ENCODE measurements at regions of chr2 and their contacts with region 1.

Region 1: DNA sequence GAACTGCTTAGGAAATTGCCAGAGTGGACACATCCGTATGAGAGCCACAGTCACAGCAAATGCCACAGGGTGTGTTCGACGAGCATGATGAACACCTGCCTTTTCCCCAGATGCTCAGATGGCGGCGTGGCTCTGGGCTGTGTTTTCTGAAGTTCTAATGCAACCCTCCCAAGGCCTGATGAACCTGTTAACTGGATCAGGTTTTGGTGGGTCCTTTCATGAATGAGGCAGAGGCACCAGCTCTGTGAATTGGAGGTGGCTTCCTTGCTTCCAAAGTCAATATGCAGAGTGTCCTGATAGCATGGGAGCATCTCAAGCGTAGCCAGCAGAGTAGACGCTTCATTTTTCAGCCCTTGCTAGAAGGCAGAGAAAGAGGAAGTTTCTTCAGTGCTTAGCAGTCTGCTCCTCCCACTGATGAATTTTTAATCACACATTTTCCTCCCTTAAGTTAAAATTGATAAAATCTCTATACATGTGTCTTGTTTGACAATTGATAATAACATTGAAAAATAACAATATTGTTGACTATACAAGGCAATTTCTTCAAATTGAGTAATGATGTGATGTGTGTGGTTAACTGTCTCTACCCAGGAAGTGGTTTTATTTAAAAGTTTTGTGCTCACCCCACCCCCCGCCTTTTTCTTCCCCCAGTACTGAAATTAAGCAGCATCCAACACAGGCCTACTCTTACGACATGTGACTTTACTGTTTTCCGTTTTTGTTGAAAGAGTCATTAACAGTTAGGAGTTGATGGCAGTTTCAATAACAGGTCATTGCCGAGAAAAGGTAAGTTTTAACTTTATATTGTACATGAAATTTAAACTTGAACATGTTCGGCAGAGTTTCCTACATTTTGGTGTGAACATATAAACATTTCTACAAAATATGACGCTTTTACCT is at the start of gene ARHGAP15:
- DNase-seq: peak; percentile 85
- H3K4me3 Mint-ChIP-seq: peak within 1 kb of the TSS; percentile 83
- H3K27ac Mint-ChIP-seq: peak within 1 kb of the TSS; percentile 100
- H3K4me1 Mint-ChIP-seq: peaks cover 29% of the 10 kb centered on the region
- H3K27me3 Mint-ChIP-seq: no peaks in the 10 kb centered on the region
- total RNA-seq, gene ARHGAP15: 70.2 to 71.2 TPM

Region 2: GRCh38 chr2:143140864-143141661 is 12.1 kb after region 1 on chr2:
- CTCF ChIA-PET with region 1: interaction called, 5 read pairs
- POLR2A ChIA-PET with region 1: interaction called, 10 read pairs
- intact Hi-C with region 1: loop called (anchors 1 kb)
- DNase-seq: peak; percentile 26
- H3K4me3 Mint-ChIP-seq: peak overlapping the region; percentile 31
- H3K27ac Mint-ChIP-seq: peak overlapping the region; percentile 78
- H3K4me1 Mint-ChIP-seq: peaks cover 87% of the 10 kb centered on the region
- H3K27me3 Mint-ChIP-seq: no peaks in the 10 kb centered on the region

Region 3: DNA sequence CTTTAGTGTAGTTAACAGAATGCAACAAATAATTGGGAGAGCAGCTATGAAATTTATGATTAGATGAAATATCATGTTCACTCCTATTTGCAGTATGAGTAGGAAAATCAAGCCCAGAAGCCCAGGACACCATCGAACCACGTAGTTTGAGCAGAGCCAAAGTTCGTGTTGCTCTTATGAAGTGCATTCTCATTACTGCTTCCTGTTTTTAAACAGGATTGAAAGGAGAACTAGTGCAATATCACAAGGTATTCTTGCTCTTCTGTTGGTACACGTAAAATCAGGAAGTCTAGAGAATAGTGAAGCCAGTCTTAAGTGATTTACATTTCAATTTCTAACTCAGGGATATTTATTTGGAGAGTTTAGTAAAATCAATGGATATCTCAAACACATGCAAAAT is 21.4 kb after region 1 on chr2:
- CTCF ChIA-PET with region 1: no interaction called
- POLR2A ChIA-PET with region 1: interaction called, 4 read pairs
- intact Hi-C with region 1: loop called (anchors 1 kb)
- DNase-seq: peak; percentile 27
- H3K4me3 Mint-ChIP-seq: peak overlapping the region; percentile 40
- H3K27ac Mint-ChIP-seq: peak overlapping the region; percentile 72
- H3K4me1 Mint-ChIP-seq: peaks cover 86% of the 10 kb centered on the region
- H3K27me3 Mint-ChIP-seq: no peaks in the 10 kb centered on the region

Region 4: DNA sequence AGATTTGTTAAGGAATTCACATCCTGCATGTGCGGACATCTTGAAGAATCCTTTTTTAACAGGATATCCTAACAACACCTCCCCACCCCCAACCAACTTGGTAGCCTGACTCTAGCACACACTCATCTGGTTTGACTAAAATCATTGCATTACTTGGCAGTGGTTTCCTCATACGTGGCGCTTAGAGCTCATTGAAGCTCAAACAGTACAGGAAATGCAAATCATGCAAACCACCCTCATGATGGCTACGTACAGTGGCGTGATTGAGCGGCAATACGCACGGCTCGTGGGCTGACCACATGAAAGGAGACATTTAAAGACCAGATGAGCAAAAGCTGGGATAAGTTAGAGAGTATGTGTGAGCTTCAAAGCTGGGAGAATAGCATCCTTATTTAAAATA is 1054.8 kb after region 1 on chr2:
- CTCF ChIA-PET with region 1: no interaction called
- POLR2A ChIA-PET with region 1: no interaction called
- intact Hi-C with region 1: loop called (anchors 10 kb)
- DNase-seq: peak; percentile 89
- H3K4me3 Mint-ChIP-seq: peak overlapping the region; percentile 52
- H3K27ac Mint-ChIP-seq: peak overlapping the region; percentile 87
- H3K4me1 Mint-ChIP-seq: peaks cover 37% of the 10 kb centered on the region
- H3K27me3 Mint-ChIP-seq: no peaks in the 10 kb centered on the region

Region 5: GRCh38 chr2:144332356-144333142 is 1203.6 kb after region 1 on chr2:
- CTCF ChIA-PET with region 1: no interaction called
- POLR2A ChIA-PET with region 1: no interaction called
- intact Hi-C with region 1: loop called (anchors 5 kb)
- DNase-seq: peak; percentile 92
- H3K4me3 Mint-ChIP-seq: peak overlapping the region; percentile 91
- H3K27ac Mint-ChIP-seq: peak overlapping the region; percentile 96
- H3K4me1 Mint-ChIP-seq: peaks cover 33% of the 10 kb centered on the region
- H3K27me3 Mint-ChIP-seq: no peaks in the 10 kb centered on the region